Ascending aorta (tissue), 2 donors: ENCODE measurements at regions of chr11 and their contacts with region 1.

Region 1: DNA sequence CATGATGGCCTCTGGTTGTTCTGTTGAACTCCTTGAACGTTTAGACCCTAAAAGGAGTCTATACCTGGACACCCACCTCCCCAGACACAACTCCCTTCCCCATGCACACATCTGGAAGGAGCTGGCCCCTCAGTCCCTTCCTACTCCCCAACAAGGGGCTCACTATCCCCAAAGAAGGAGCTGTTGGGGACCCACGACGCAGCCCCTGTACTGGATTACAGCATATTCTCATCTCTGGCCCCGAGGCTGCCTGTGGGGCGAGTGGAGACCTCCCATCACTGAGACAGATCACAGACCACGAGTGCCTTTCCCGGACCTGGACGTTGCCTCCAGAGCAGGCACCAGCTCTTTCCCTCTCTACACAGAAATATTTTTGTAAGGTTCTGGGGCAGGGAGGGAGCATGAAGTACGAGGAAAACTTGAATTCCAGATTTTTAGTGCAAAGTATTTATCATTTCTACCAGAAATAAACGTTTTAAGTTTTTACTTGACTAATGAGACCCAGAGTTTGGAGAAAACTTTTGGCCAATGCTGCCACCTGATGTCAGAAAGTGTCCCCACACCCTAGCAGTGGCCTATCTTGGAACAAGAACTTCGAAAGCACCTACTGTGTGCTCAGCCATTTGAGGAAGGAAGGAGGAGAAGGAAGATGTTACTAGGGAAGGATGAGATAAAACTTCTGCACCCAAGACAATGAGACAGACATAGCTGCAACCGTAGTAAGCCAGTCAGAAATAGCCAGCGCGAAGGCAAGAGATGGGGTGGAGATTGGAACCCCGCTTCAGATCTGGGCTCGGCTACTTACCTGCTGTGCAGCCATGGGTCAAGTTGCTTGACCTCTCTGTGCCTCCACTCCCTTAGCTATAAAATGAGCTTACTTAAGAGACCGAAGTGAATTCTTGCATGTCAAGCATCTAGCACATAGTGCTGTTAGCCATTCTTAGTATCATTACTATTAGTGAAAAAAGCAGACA is 10.2 kb upstream of the POU2F3 start:
- DNase-seq: no peak
- H3K4me3 ChIP-seq: no peak overlapping the region
- H3K27ac ChIP-seq: no peak overlapping the region
- H3K4me1 ChIP-seq: no peaks in the 10 kb centered on the region
- H3K27me3 ChIP-seq: no peaks in the 10 kb centered on the region
- CTCF ChIP-seq: peak; percentile 41 to 63 (median 50)

Region 2: GRCh38 chr11:120172054-120172911 is 57.5 kb before region 1 on chr11:
- intact Hi-C with region 1: loop called (anchors 1 kb)
- DNase-seq: peak in 1 of 2 donors; percentile 75
- H3K4me3 ChIP-seq: no peak overlapping the region
- H3K27ac ChIP-seq: no peak overlapping the region
- H3K4me1 ChIP-seq: peaks cover 0 to 11% of the 10 kb centered on the region in 2 donors
- H3K27me3 ChIP-seq: no peaks in the 10 kb centered on the region
- CTCF ChIP-seq: peak; percentile 49 to 83 (median 70)